ENCODE measurements at regions of chr1 and their contacts with region 1.

Region 1: GRCh38 chr1:13960375-13960987 is 260.5 kb downstream of the PRDM2 start:
- DNase-seq: peak; percentile 41 to 78 (median 58)
- ATAC-seq: peak; percentile 56
- H3K4me3 ChIP-seq: no peak overlapping the region
- H3K4me3 Mint-ChIP-seq: no peak overlapping the region
- H3K27ac ChIP-seq: no peak overlapping the region
- H3K27ac Mint-ChIP-seq: no peak overlapping the region
- H3K4me1 ChIP-seq: peaks cover 5% of the 10 kb centered on the region
- H3K4me1 Mint-ChIP-seq: no peaks in the 10 kb centered on the region
- H3K27me3 ChIP-seq: peaks cover 0 to 9% of the 10 kb centered on the region in 2 experiments
- H3K27me3 Mint-ChIP-seq: peaks cover 68% of the 10 kb centered on the region
- CTCF ChIP-seq: peak; percentile 96

Region 2: DNA sequence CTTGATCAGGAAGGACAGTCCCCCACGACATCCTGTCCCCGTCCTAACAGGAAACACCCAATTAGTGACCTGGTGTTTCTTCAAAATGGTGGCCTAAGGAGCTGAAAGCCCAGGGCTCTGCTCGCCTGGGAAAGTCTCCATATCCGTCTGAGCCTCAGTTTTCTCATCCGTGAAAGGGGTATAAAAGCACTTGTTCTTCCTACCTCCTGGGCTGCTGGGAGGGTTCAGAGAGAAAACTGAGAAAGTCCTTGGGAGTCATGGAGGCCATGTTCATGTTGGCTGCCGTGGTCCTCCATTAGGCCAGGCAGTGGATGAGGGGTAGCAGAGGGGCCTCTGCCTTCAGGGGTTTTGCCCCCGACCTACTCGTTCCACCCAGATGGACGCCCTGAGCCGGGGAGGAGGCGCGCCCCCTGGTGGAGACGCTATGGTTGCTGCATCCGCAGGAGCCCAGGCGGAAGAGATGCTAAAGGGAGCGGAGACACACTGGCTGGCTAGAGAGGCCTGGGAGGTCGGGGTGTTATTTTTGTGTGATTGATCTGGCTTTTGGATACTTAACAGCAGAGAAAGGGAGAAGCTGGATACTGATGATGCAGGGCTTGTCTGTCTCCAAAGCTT is 147.0 kb before region 1 on chr1:
- CTCF ChIA-PET with region 1: no interaction called
- POLR2A ChIA-PET with region 1: no interaction called
- intact Hi-C with region 1: loop called in 1 of 2 experiments (anchors 10 kb)
- DNase-seq: peak; percentile 35 to 71 (median 50)
- ATAC-seq: peak; percentile 51
- H3K4me3 ChIP-seq: no peak overlapping the region
- H3K4me3 Mint-ChIP-seq: no peak overlapping the region
- H3K27ac ChIP-seq: no peak overlapping the region
- H3K27ac Mint-ChIP-seq: no peak overlapping the region
- H3K4me1 ChIP-seq: peaks cover 13% of the 10 kb centered on the region
- H3K4me1 Mint-ChIP-seq: peaks cover 24% of the 10 kb centered on the region
- H3K27me3 ChIP-seq: no peaks in the 10 kb centered on the region
- H3K27me3 Mint-ChIP-seq: no peaks in the 10 kb centered on the region
- CTCF ChIP-seq: peak; percentile 60